Activated T-helper 2 cell treated with anti-CD3 and anti-CD28 coated beads, Interferon-gamma antibody, Interleukin-2, Interleukin-4, amounts not matched to agents 10 μg/mL and 5 μg/mL and 100 μg/mL, durations not matched to agents 14 hours and 24 hours and 36 hours (primary cell): ENCODE measurements at regions of chr10 and their contacts with region 1.

Region 1: DNA sequence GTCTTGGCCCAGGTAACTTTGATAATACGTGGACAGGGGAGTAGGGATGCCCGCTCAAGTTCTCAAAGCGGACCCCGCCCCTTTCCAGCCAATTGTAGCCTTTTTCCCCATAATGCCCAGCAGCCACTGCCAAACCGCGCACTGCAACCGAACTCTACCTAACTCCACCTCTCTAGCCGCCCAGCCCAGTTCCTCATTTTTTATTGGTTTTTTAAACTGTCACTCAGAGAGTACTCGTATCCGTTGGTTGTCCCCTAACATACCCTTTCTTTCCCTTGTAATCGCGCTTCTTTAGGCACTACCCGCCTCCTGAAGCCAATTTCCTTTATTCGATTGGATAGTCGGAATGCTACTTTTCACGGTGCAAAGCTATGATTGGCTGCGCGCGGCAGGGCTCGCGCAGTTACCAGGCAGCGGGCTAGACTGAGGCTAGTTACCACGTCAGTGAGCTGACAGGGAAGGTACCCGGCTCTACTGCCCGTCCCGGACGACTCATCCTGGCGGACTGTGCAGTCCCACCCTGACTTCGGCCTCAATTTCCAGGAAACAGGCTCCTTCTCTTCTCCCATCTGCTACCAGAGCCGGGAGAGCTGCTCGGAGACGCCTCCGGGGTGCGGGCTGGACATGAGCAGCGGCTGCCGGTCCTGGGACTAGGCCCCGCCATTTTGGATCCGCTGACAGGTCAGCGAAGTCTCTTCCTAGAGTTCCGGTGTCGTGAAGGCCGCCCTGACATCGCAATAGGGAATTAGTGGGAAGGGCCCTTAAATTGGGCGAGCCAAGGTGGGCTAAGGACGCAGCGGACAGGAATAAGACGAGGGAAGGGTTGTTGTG is at the start of gene GBF1:
- DNase-seq: peak; percentile 92
- H3K4me3 Mint-ChIP-seq: peak within 1 kb of the TSS; percentile 99
- H3K27ac Mint-ChIP-seq: peak within 1 kb of the TSS; percentile 92
- H3K4me1 Mint-ChIP-seq: peaks cover 39% of the 10 kb centered on the region
- H3K27me3 Mint-ChIP-seq: peaks cover 14% of the 10 kb centered on the region
- total RNA-seq, gene GBF1: 47.9 and 49.2 TPM in 2 replicates

Region 2: DNA sequence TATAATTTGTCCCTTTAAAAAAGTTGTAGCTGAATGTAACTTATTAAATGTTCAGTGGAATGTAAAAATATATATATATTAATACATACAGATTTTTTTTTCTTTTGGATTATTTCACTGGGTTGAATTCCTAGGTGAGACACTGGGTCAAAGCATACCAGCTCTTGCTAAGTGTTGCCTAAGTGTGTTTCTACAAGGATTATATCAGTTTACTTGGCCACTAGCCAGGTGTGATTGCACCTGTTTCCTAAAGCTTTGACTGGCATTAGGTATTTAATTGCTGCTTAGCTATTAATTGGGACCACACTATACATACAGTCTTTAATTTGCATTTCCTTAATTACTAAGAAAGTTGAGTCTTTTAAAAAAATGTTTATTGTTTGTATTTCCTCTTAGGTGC is 24.7 kb before region 1 on chr10:
- intact Hi-C with region 1: no loop called
- DNase-seq: no peak
- H3K4me3 Mint-ChIP-seq: no peak overlapping the region
- H3K27ac Mint-ChIP-seq: no peak overlapping the region
- H3K4me1 Mint-ChIP-seq: peaks cover 3% of the 10 kb centered on the region
- H3K27me3 Mint-ChIP-seq: peaks cover 26% of the 10 kb centered on the region

Region 3: DNA sequence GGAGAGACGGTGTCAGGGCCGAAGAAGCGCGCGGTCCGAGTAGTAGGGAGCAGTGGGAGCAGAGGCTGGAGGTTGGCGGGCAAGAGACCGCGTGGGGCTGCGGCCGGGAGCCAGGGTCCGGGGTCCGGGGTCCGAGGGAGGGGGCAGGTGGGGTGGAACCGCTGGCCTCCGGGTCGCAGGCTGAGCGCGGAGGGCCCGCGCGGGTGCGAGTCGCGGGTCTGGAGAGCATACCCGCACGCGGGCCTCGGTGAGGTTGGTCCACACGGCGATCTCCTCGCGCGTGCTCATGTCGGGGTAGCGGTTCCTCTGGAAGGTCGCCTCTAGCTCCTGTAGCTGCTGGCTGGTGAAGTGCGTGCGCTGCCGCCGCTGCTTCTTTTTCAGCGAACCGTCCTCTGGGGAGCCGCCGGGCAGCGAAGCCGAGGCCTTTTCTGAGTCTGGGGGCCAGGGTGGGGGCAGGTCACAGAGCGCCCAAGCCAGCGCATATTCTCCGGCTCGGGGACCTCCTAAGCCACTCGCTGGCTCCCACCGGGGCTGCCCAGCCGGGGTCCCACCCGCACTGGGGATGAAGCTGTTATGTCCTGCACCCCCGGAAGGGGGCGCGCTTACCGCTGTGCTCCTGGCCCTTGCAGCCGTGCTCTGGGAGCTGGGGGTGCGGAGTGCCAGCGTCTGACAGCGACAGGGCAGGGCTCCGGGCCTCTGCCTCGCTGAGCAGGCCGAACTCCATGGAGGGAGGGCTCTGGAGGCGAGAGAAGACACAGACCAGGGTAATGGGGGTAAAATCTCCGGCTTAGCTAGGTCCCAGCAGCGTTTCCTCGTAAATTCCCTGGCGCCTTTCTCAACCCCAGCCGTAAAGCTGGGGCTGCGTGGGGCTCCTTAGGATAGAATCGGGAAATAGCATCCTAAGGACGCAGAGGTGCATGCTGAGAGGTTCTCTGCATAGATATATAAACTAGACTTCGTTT is 13.7 kb before region 1 on chr10:
- intact Hi-C with region 1: loop called (anchors 1 kb)
- DNase-seq: peak; percentile 69
- H3K4me3 Mint-ChIP-seq: peak overlapping the region; percentile 62
- H3K27ac Mint-ChIP-seq: no peak overlapping the region
- H3K4me1 Mint-ChIP-seq: peaks cover 9% of the 10 kb centered on the region
- H3K27me3 Mint-ChIP-seq: peaks cover 55% of the 10 kb centered on the region

Region 4: DNA sequence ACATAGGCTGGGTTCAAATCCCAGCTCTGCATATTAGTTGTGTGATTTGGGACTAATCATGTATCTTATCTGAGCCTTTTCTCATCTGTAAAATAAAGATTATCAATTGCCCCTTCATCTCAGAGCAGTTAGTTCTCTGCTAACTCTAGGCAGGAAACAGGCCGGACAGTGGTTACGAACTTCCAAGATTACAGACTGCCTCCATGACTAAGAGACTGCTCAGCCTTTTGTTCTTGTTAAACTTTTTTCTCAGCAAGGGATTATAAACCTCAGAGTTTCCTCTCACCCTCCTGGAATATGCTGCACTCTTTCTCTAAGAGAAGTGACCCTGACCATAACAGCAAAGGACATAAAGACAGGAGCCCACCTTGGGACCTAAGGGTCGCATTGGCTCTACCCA is 97.6 kb after region 1 on chr10:
- intact Hi-C with region 1: loop called (anchors 2 kb)
- DNase-seq: no peak
- H3K4me3 Mint-ChIP-seq: no peak overlapping the region
- H3K27ac Mint-ChIP-seq: no peak overlapping the region
- H3K4me1 Mint-ChIP-seq: peaks cover 7% of the 10 kb centered on the region
- H3K27me3 Mint-ChIP-seq: no peaks in the 10 kb centered on the region